Activated CD8-positive, alpha-beta memory T cell treated with anti-CD3 and anti-CD28 coated beads, Interleukin-2, amount 10 ng/mL, durations not matched to agents 7 days and 5 days (primary cell): ENCODE measurements at regions of chr3 and their contacts with region 1.

Region 1: GRCh38 chr3:138417559-138417982 is 16.8 kb upstream of the ESYT3 start:
- DNase-seq: peak; percentile 74
- ATAC-seq: peak; percentile 82
- H3K4me3 Mint-ChIP-seq: no peak overlapping the region
- H3K27ac Mint-ChIP-seq: no peak overlapping the region
- H3K4me1 Mint-ChIP-seq: peaks cover 4% of the 10 kb centered on the region
- H3K27me3 Mint-ChIP-seq: peaks cover 40% of the 10 kb centered on the region

Region 2: GRCh38 chr3:138405486-138405885 is 12.1 kb before region 1 on chr3:
- CTCF ChIA-PET with region 1: interaction called, 10 read pairs
- DNase-seq: no peak
- ATAC-seq: no peak
- H3K4me3 Mint-ChIP-seq: no peak overlapping the region
- H3K27ac Mint-ChIP-seq: no peak overlapping the region
- H3K4me1 Mint-ChIP-seq: no peaks in the 10 kb centered on the region
- H3K27me3 Mint-ChIP-seq: peaks cover 15% of the 10 kb centered on the region

Region 3: GRCh38 chr3:138434276-138434874 is 16.8 kb after region 1 on chr3 and contains the start of gene ESYT3:
- CTCF ChIA-PET with region 1: interaction called, 18 read pairs
- DNase-seq: peak; percentile 79
- ATAC-seq: peak; percentile 98
- H3K4me3 Mint-ChIP-seq: peak within 1 kb of the TSS; percentile 67
- H3K27ac Mint-ChIP-seq: no peak within 1 kb of the TSS
- H3K4me1 Mint-ChIP-seq: peaks cover 12% of the 10 kb centered on the region
- H3K27me3 Mint-ChIP-seq: peaks cover 73% of the 10 kb centered on the region
- total RNA-seq, gene ESYT3: 0.23 to 0.26 TPM